Activated naive CD4-positive, alpha-beta T cell treated with anti-CD3 and anti-CD28 coated beads for 36 hours (primary cell): ENCODE measurements at regions of chr3 and their contacts with region 1.

Region 1: GRCh38 chr3:183481582-183481981 is 53.2 kb upstream of the MCF2L2 start:
- DNase-seq: no peak
- H3K4me3 Mint-ChIP-seq: no peak overlapping the region
- H3K27ac Mint-ChIP-seq: no peak overlapping the region
- H3K4me1 Mint-ChIP-seq: peaks cover 6% of the 10 kb centered on the region
- H3K27me3 Mint-ChIP-seq: no peaks in the 10 kb centered on the region

Region 2: DNA sequence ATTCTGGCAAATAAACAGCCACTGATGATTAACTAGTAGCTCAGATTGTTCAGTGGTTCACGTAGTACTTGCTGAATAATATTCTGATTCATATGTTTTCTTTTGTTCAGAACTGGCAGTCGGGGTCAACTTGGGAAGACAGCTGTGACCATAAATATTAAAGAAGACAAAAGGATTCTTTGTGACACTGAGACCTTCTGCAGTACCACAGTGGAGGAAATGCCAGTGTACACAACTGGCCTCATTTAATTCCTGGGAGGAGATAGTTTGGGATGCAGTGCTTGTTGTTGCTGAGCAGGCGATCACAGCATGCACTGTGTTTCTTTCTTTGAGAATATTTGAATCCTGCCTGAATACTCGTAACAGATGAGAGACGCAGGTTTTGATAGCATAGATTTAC is 26.5 kb before region 1 on chr3:
- CTCF ChIA-PET with region 1: no interaction called
- intact Hi-C with region 1: no loop called
- DNase-seq: no peak
- H3K4me3 Mint-ChIP-seq: no peak overlapping the region
- H3K27ac Mint-ChIP-seq: no peak overlapping the region
- H3K4me1 Mint-ChIP-seq: no peaks in the 10 kb centered on the region
- H3K27me3 Mint-ChIP-seq: no peaks in the 10 kb centered on the region

Region 3: DNA sequence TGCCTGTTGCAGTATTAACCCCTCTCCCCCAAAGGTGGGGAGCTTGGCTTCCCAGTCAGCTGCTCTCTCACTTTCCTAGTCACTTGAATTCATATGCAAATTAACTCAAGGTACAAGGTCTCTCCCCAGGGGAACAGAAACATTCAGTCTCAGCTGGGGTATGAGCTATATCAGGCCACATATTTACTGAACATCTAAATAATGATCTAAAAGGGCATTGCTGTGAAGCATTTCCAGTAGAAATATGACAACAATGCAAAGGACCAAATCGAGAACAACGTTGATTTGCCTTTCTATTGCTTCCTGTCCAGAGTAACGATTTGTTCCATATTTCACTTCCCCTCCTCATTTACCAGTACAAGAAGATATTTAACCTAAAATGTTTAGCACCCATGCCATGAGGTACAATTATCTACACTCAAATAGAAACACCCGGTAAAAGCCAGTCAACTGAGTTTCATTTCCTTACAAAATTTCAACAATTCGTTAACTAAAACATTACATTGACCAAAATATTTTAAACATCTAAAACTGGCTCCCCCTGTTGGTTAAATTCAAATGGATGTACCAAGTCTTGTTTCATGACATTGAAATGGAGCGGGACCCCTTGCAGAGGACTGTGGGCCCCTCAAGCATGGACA is 110.4 kb after region 1 on chr3:
- CTCF ChIA-PET with region 1: interaction called, 6 read pairs
- intact Hi-C with region 1: loop called (anchors 1 kb)
- DNase-seq: peak; percentile 19
- H3K4me3 Mint-ChIP-seq: peak overlapping the region; percentile 37
- H3K27ac Mint-ChIP-seq: peak overlapping the region; percentile 86
- H3K4me1 Mint-ChIP-seq: peaks cover 48% of the 10 kb centered on the region
- H3K27me3 Mint-ChIP-seq: no peaks in the 10 kb centered on the region

Region 4: GRCh38 chr3:183697610-183698317 is 216.2 kb after region 1 on chr3 and contains the start of gene YEATS2:
- CTCF ChIA-PET with region 1: interaction called, 3 read pairs
- intact Hi-C with region 1: loop called (anchors 5 kb)
- DNase-seq: peak; percentile 79
- H3K4me3 Mint-ChIP-seq: peak within 1 kb of the TSS; percentile 80
- H3K27ac Mint-ChIP-seq: peak within 1 kb of the TSS; percentile 91
- H3K4me1 Mint-ChIP-seq: peaks cover 28% of the 10 kb centered on the region
- H3K27me3 Mint-ChIP-seq: no peaks in the 10 kb centered on the region
- total RNA-seq, gene YEATS2: 38.1 to 39.0 TPM

Region 5: DNA sequence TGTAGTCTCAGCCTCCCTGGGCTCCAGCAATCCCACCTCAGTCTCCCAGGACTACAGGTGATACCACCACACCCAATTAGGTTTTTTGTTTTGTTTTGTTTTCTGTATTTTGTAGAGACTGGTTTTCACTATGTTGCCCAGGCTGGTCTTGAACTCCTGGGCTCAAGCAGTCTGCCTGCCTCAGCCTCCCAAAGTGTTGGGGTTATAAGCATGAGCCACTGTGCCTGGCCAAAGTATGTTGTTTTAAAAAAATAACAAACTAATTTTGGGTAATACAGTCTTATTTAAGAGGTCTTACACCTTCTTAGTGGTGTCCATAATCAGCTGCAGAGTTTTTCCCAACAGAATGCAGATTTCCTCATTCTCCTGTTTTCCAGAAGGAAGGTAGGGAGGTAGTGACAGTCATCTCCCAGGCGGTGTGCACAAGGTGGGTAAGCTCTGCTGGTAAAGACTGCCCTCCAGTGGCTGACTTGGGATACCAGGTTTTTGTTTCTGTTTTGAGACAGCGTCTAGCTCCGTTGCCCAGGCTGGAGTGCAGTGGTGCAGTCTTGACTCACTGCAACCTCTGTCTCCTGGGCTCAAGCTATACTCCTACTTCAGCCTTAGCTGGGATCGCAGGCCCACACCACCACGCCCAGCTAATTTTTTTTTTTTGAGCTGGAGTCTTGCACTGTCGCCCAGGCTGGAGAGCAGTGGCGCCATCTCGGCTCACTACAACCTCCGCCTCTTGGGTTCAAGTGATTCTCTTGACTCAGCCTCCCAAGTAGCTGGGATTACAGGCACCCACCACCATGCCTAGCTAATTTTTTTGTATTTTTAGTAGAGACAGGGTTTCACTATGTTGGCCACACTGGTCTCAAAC is 285.4 kb after region 1 on chr3:
- CTCF ChIA-PET with region 1: interaction called, 4 read pairs
- intact Hi-C with region 1: loop called (anchors 1 kb)
- DNase-seq: peak; percentile 89
- H3K4me3 Mint-ChIP-seq: no peak overlapping the region
- H3K27ac Mint-ChIP-seq: no peak overlapping the region
- H3K4me1 Mint-ChIP-seq: peaks cover 11% of the 10 kb centered on the region
- H3K27me3 Mint-ChIP-seq: no peaks in the 10 kb centered on the region

Region 6: GRCh38 chr3:183912895-183913579 is 431.5 kb after region 1 on chr3:
- CTCF ChIA-PET with region 1: no interaction called
- intact Hi-C with region 1: no loop called
- DNase-seq: no peak
- H3K4me3 Mint-ChIP-seq: no peak overlapping the region
- H3K27ac Mint-ChIP-seq: no peak overlapping the region
- H3K4me1 Mint-ChIP-seq: no peaks in the 10 kb centered on the region
- H3K27me3 Mint-ChIP-seq: no peaks in the 10 kb centered on the region

Region 7: GRCh38 chr3:183980403-183980802 is 498.8 kb after region 1 on chr3:
- CTCF ChIA-PET with region 1: no interaction called
- intact Hi-C with region 1: no loop called
- DNase-seq: no peak
- H3K4me3 Mint-ChIP-seq: no peak overlapping the region
- H3K27ac Mint-ChIP-seq: no peak overlapping the region
- H3K4me1 Mint-ChIP-seq: no peaks in the 10 kb centered on the region
- H3K27me3 Mint-ChIP-seq: no peaks in the 10 kb centered on the region